ENCODE measurements at regions of chr13 and their contacts with region 1.

Region 1: DNA sequence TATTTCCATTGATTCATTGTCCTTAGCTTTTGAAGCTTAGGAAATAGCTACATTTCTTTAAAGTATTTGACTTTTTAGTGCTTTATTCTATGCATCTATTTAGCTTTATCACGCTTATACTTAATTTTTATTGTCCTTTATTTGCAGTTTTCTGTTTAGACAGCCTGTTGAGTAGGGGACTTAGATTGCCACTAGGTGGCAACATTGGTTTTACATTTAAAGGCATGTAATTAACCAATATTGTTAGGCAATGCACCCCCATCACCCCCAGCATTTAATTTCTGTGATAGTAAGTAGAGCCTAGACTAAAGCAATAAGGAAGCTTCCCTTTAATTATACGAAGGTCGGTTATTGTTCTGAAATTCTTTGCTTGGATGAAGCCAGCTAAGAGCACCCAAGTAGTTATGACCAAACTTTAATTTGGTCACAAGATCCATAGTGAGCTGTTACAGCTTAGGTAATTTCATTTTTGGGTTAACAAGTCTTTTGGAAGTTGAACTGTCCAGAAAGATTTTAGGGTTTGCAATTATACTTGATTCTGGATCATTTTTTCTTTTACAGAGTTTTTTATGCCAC is 36.5 kb downstream of the B3GLCT start:
- DNase-seq: peak; percentile 38
- H3K4me3 ChIP-seq: no peak overlapping the region
- H3K27ac ChIP-seq: no peak overlapping the region
- H3K4me1 ChIP-seq: no peaks in the 10 kb centered on the region
- H3K27me3 ChIP-seq: no peaks in the 10 kb centered on the region
- CTCF ChIP-seq: peak; percentile 41 to 44
- POLR2A ChIP-seq: no peak

Region 2: GRCh38 chr13:31221057-31221456 is 15.2 kb before region 1 on chr13:
- CTCF ChIA-PET with region 1: interaction called, 28 read pairs
- POLR2A ChIA-PET with region 1: no interaction called
- dilution Hi-C with region 1: no loop called
- intact Hi-C with region 1: no loop called
- DNase-seq: no peak
- H3K4me3 ChIP-seq: no peak overlapping the region
- H3K27ac ChIP-seq: no peak overlapping the region
- H3K4me1 ChIP-seq: no peaks in the 10 kb centered on the region
- H3K27me3 ChIP-seq: no peaks in the 10 kb centered on the region
- CTCF ChIP-seq: no peak
- POLR2A ChIP-seq: no peak

Region 3: DNA sequence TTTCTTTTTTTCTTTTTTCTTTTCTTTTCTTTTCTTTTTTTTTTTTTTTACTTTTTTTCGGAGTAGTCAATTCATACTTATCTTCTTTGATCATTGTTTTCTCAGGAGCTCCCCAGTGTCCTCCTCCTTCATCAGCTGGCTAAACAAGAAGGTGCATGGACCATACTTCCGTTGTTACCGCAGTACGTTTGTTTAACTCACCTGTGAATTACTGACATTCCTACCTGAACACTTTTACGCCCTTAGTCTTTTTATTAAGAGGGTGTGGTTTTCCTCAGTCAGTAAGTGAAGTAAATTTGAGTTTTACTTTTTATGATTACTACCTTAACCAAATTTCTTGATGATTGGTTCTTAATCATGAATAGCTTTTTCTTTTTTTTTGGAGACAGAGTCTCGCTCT is 10.6 kb after region 1 on chr13:
- CTCF ChIA-PET with region 1: interaction called, 16 read pairs
- POLR2A ChIA-PET with region 1: no interaction called
- dilution Hi-C with region 1: no loop called
- intact Hi-C with region 1: no loop called
- DNase-seq: no peak
- H3K4me3 ChIP-seq: no peak overlapping the region
- H3K27ac ChIP-seq: no peak overlapping the region
- H3K4me1 ChIP-seq: no peaks in the 10 kb centered on the region
- H3K27me3 ChIP-seq: no peaks in the 10 kb centered on the region
- CTCF ChIP-seq: no peak
- POLR2A ChIP-seq: no peak

Region 4: DNA sequence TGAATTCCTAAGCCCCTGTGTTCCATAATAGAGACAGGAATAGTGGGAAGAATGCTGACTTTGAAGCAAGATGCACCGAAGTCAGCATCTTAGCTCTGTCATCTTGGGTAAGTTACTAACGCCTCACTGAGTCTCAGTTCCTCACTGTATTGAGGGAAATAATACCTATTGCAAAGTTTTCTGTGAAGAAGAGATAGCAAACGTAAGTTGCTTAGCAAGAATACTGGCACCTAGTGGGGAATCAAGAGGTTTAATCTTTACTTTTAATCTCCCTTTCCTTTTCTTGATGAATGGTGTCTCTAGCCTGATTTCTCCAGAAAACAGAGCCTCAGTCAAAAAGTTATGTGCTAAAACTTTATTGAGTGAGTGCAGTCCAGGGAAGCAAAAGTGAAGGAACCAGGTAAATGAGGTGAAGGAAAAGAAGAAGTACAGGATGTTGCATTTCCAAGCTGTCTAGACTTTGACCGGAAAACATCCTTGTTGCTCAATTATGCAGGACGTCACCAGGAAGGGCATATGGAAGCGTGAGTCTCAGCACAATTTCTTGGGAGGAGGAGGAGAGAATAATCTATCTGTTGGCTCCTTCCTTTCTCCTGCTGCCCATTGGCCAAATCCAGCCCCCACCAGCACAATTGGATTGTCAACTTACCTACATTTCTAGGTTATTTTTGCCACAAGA is 173.5 kb after region 1 on chr13:
- CTCF ChIA-PET with region 1: interaction called, 21 read pairs
- POLR2A ChIA-PET with region 1: no interaction called
- dilution Hi-C with region 1: loop called (anchors 25 kb)
- intact Hi-C with region 1: no loop called
- DNase-seq: no peak
- H3K4me3 ChIP-seq: no peak overlapping the region
- H3K27ac ChIP-seq: no peak overlapping the region
- H3K4me1 ChIP-seq: no peaks in the 10 kb centered on the region
- H3K27me3 ChIP-seq: peaks cover 12 to 19% of the 10 kb centered on the region in 2 experiments
- CTCF ChIP-seq: no peak
- POLR2A ChIP-seq: no peak

Region 5: GRCh38 chr13:31742097-31742734 is 505.9 kb after region 1 on chr13:
- CTCF ChIA-PET with region 1: interaction called, 12 read pairs
- POLR2A ChIA-PET with region 1: no interaction called
- dilution Hi-C with region 1: no loop called
- intact Hi-C with region 1: loop called (anchors 1 kb)
- DNase-seq: peak; percentile 64
- H3K4me3 ChIP-seq: no peak overlapping the region
- H3K27ac ChIP-seq: no peak overlapping the region
- H3K4me1 ChIP-seq: no peaks in the 10 kb centered on the region
- H3K27me3 ChIP-seq: peaks cover 0 to 2% of the 10 kb centered on the region in 2 experiments
- CTCF ChIP-seq: peak; percentile 88 to 95
- POLR2A ChIP-seq: no peak

Measured in endothelial cell of umbilical vein (primary cell).